Heart right ventricle (tissue), 16 donors: ENCODE measurements at regions of chr20 and their contacts with region 1.

Region 1: DNA sequence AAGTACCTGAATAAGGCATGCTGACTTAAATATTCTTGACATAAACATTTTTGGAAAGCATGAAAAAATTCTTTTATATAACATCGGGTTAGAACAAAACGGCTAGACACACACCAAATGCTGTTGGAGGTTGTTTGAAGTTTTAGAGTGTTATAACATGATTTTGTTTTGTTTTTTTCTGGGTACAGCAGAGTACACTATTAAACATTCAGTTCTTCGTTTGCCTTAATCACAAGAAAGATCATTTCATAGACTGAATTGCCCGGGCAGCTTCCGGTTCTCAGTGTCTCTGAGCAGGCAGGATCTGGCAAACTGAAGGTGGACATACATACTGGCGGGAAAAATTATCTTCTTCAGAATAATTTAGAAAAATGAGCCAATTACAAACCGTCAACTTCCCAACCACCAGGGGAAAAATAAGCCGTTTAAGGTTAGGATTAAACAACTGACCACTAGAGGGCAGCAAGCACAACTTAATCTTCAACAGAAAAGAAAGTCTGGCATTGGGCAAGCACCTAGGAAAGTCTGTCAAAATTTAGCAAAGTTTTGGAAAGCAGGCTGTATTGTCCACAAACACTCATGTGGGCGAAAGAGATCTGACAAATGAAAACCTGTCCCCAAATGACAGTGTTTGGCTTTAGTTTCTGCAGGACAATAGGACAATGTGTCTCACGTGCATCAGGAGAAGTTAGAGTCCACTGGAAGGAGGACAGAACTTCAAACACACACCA is 15.0 kb downstream of the ZNF217 start:
- DNase-seq: peak in 1 of 2 donors; percentile 85
- ATAC-seq: peak; percentile 57 to 86 (median 77)
- H3K4me3 ChIP-seq: peak overlapping the region in 5 of 10 donors; percentile 5 to 33 (median 17)
- H3K27ac ChIP-seq: peak overlapping the region in 8 of 10 donors; percentile 12 to 86 (median 62)
- H3K4me1 ChIP-seq: peaks cover 3 to 75% (median 55%) of the 10 kb centered on the region in 9 donors
- H3K27me3 ChIP-seq: no peaks in the 10 kb centered on the region
- CTCF ChIP-seq: peak; percentile 80 to 95 (median 87)

Region 2: GRCh38 chr20:53869466-53870258 is 291.0 kb after region 1 on chr20:
- intact Hi-C with region 1: loop called in 6 of 10 experiments (anchors 1 to 10 kb)
- DNase-seq: peak in 1 of 2 donors; percentile 77
- ATAC-seq: peak; percentile 75 to 90 (median 82)
- H3K4me3 ChIP-seq: no peak overlapping the region
- H3K27ac ChIP-seq: peak overlapping the region in 5 of 10 donors; percentile 2 to 73 (median 25)
- H3K4me1 ChIP-seq: peaks cover 0 to 73% (median 43%) of the 10 kb centered on the region in 9 donors
- H3K27me3 ChIP-seq: no peaks in the 10 kb centered on the region
- CTCF ChIP-seq: peak; percentile 48 to 89 (median 79)

Region 3: DNA sequence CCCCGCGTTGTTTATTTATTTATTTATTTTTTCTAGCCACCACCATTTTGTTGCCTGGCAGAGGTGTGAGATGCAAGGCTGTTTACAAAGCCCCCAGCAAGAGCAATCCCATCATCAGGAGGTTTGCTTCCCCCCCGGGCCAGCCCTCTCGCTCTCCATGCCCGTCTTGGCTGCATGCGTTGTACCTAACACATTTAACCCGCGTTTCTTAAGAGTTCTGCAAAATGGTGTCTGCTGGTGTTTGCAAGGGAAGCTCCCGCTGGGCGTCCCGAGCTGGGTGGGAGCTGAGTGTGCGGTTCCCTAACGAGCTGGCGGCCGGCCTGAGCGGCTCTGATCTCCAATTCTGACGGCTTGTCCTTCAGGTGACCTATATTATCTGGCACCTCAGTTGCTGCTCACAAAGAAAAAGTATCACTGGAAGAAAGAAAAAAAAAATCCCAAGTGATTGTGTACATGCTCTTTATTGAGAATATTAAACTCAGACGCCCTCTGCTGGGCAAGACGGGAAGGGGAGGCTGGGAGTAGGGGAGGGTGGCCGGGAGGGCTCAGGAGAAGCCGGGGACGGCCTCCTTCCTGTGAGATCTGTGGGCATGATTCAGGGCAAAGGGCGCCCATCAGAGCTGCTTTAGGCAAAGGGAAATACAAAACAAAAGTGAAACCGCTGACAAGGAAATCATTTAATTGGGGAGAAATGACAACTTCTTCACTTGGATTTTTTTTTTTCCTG is 337.0 kb after region 1 on chr20:
- intact Hi-C with region 1: loop called in 8 of 10 experiments (anchors 1 to 5 kb)
- DNase-seq: peak; percentile 96 to 98
- ATAC-seq: peak; percentile 87 to 96 (median 92)
- H3K4me3 ChIP-seq: peak overlapping the region; percentile 50 to 76 (median 64)
- H3K27ac ChIP-seq: peak overlapping the region; percentile 65 to 97 (median 89)
- H3K4me1 ChIP-seq: peaks cover 5 to 47% (median 33%) of the 10 kb centered on the region in 9 donors
- H3K27me3 ChIP-seq: no peaks in the 10 kb centered on the region
- CTCF ChIP-seq: peak; percentile 84 to 93 (median 92)

Region 4: DNA sequence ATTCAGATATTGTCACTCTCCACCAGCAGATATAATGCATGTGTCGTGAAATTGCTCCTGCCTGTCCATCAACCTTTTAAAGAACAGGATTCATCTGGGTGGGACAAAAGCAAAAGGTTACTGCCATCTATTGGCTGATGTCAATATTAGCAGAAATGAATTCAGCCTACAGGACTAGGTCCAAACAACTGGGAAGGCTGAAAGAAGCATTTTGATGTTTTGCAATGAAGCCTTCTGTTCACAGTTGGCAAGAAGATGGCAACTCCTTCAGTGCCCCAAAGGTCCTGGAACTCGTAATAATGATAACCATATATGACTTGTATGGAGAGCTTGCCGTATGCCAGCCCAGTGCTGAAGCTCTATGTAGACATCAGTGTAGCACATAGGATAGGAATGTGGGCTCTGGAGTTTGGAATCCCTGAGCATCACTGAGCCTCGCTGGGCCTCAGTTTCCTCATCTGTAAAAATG is 484.2 kb after region 1 on chr20:
- intact Hi-C with region 1: loop called in 8 of 10 experiments (anchors 5 to 10 kb)
- DNase-seq: no peak
- ATAC-seq: peak in 5 of 8 donors; percentile 22 to 71 (median 46)
- H3K4me3 ChIP-seq: no peak overlapping the region
- H3K27ac ChIP-seq: peak overlapping the region in 1 of 10 donors; percentile 6
- H3K4me1 ChIP-seq: peaks cover 0 to 14% (median 0%) of the 10 kb centered on the region in 9 donors
- H3K27me3 ChIP-seq: peaks cover 0 to 14% (median 7%) of the 10 kb centered on the region in 7 donors
- CTCF ChIP-seq: peak; percentile 14 to 78 (median 66)